A549 (cell line): ENCODE measurements at regions of chr1 and their contacts with region 1.

Region 1: GRCh38 chr1:157992031-157992832 is 1.2 kb upstream of the KIRREL1 start:
- DNase-seq: peak; percentile 69
- ATAC-seq: peak; percentile 54 to 76
- H3K4me3 ChIP-seq: peak overlapping the region; percentile 98; the same call in 1 of the 3 replicates
- H3K27ac ChIP-seq: peak overlapping the region; percentile 97 to 98
- H3K4me1 ChIP-seq: peaks cover 35% of the 10 kb centered on the region
- CTCF ChIP-seq: peak; percentile 97
- EP300 ChIP-seq: no peak
- POLR2A ChIP-seq: no peak
- RAD21 ChIP-seq: peak; percentile 98 to 100

Region 2: DNA sequence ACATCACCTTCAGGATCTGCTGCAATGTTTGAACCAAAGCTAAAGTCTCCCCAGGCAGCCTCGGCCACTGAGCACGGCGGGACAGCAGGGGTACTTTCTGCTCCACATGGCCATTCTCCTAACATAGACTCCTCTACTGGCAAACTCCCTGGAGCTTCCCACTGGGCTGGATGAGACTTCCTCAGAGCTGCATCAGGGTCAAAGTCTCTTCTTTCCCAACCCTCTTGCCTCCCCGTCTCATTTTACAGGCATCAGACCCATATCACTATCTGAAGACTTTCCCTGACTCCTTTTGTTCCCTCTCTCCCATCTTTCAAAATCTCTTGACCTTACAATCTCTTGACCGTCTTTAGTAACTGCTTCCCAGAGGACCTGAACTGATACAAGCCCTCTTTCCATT is 41.0 kb before region 1 on chr1:
- CTCF ChIA-PET with region 1: no interaction called
- POLR2A ChIA-PET with region 1: no interaction called
- DNase-seq: no peak
- ATAC-seq: no peak
- H3K4me3 ChIP-seq: no peak overlapping the region
- H3K27ac ChIP-seq: no peak overlapping the region
- H3K4me1 ChIP-seq: no peaks in the 10 kb centered on the region
- CTCF ChIP-seq: no peak
- EP300 ChIP-seq: no peak
- POLR2A ChIP-seq: no peak
- RAD21 ChIP-seq: no peak

Region 3: DNA sequence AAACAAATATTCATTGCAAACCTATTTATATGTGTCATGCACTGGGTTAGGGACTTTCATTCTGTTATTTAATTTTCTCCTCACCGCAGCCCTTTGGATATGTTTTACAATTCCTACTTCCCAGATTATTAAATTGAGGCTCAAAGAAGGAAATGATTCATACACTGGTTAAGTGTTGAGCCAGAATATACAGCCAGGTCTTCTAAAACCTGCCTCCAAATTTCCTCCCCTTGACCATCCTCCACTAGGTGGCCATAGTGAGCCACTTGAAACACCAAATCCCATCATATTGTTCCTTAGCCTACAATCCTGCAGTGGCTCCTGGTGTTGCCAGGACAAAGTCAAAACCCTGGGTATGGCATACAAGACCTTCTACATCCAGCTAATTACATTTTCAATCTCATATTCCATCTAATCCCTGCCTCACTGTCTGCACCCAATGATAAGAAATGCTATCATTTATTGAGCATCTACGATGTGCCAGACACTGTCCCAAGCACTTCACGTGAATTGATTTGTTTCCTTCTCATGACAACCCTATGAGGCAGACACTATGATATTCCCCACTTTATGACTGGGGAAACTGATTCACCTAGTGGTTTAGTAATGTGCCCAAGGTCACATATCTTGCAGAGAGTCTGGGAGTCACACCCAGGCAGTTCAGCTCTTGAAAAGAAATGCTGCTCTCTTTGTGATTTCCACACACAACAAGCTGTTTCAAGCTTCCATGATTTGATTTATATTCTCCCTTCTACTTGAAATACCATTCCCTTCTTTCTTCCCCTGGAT is 22.3 kb before region 1 on chr1:
- CTCF ChIA-PET with region 1: interaction called, 139 read pairs
- POLR2A ChIA-PET with region 1: interaction called, 6 read pairs
- DNase-seq: peak; percentile 60 to 72
- ATAC-seq: peak; percentile 70 to 84
- H3K4me3 ChIP-seq: no peak overlapping the region
- H3K27ac ChIP-seq: peak overlapping the region; percentile 75 to 87
- H3K4me1 ChIP-seq: peaks cover 44% of the 10 kb centered on the region
- CTCF ChIP-seq: peak; percentile 85
- EP300 ChIP-seq: no peak
- POLR2A ChIP-seq: no peak
- RAD21 ChIP-seq: peak; percentile 77 to 85

Region 4: GRCh38 chr1:158013840-158014730 is 21.9 kb after region 1 on chr1:
- CTCF ChIA-PET with region 1: interaction called, 1,281 read pairs
- POLR2A ChIA-PET with region 1: interaction called, 22 read pairs
- DNase-seq: no peak
- ATAC-seq: no peak
- H3K4me3 ChIP-seq: no peak overlapping the region
- H3K27ac ChIP-seq: peak overlapping the region in 1 of 2 experiments; percentile 98; a peak in 3 of 6 replicates
- H3K4me1 ChIP-seq: peaks cover 95% of the 10 kb centered on the region
- CTCF ChIP-seq: no peak
- EP300 ChIP-seq: no peak
- POLR2A ChIP-seq: no peak
- RAD21 ChIP-seq: no peak

Region 5: DNA sequence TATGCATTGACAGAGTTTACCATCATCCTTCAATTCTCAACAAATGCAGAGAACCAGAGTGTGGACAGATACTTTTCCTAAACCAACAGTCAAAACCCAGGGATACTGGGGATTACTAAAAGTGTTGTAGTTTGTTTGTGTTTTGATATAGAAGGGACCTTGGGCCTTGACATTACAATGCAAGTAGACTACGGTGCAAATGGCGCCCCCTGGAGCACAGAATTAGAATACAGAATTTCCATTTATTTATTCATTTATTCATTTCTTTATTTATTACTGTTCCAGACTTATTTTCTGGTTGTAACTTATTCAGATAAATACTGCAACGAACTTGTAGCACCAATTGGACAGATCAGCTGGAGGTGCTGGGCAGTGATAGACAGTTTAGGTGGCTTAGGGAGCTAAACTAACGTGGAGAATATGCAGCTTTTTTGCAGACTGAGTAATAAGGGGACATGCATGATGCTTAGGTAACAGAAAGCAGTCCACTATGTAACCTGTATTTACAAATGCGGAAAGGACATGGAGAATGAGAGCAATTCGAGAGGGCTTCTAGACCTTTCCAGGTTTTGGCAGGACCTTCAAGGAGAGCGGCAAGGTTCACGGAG is 43.8 kb after region 1 on chr1:
- CTCF ChIA-PET with region 1: interaction called, 1,281 read pairs
- POLR2A ChIA-PET with region 1: interaction called, 4 read pairs
- DNase-seq: peak in 1 of 2 experiments; percentile 72
- ATAC-seq: peak; percentile 23 to 57; a peak in 3 of 6 replicates
- H3K4me3 ChIP-seq: no peak overlapping the region
- H3K27ac ChIP-seq: peak overlapping the region; percentile 66 to 84; a peak in 5 of 6 replicates
- H3K4me1 ChIP-seq: peaks cover 36% of the 10 kb centered on the region
- CTCF ChIP-seq: peak; percentile 88
- EP300 ChIP-seq: no peak
- POLR2A ChIP-seq: no peak
- RAD21 ChIP-seq: peak; percentile 81 to 84

Region 6: DNA sequence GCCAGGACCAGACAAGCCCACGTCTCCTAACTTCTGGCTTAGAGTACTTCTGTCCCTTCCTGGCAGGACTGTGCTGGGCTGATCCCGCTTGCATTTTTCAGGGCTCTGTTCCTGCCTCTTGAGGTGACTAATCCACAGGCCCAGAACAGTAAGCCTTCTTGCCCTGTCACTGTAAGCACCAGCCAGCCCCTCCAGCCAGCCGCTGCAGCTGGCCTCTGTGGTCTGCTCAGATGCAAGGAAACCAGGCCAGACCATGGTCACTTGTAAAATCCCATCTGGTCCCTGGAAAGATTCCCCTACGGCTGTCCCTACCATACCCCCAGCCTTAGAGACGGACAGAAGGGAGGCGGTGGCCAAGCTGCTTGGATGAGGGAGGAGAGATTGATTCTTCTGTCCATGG is 75.4 kb after region 1 on chr1:
- CTCF ChIA-PET with region 1: interaction called, 11 read pairs
- POLR2A ChIA-PET with region 1: no interaction called
- DNase-seq: no peak
- ATAC-seq: peak in 1 of 2 experiments; percentile 24; a peak in 1 of 6 replicates
- H3K4me3 ChIP-seq: no peak overlapping the region
- H3K27ac ChIP-seq: no peak overlapping the region
- H3K4me1 ChIP-seq: no peaks in the 10 kb centered on the region
- CTCF ChIP-seq: no peak
- EP300 ChIP-seq: no peak
- POLR2A ChIP-seq: no peak
- RAD21 ChIP-seq: no peak

Region 7: DNA sequence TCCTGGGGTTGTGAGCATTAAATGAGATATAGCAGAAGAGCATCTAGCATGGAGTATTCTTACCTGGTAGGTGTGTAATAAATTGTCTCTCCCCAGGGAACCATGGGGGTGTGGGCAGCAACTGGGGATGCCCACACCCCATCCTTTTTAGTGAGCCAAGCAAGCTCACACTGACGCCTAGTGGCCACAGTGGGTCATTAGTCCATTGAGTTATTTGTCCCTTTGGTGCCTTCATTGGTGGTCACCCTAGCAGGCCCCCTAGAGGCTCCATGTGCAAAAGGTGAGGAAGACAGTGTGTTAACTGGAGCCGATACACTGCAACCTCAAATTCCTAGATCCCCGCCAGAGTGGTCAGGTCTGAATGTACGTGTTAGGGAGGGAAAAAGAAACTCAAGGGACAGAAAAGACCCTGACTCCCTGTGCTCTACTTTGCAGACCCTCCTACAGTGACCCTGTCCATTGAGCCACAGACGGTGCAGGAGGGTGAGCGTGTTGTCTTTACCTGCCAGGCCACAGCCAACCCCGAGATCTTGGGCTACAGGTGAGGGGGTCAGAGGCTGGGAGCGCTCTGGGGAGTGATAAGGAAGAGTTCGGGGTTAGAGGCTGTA is 95.2 kb after region 1 on chr1:
- CTCF ChIA-PET with region 1: interaction called, 2,212 read pairs
- POLR2A ChIA-PET with region 1: interaction called, 5 read pairs
- DNase-seq: peak; percentile 84 to 86
- ATAC-seq: peak; percentile 89 to 95
- H3K4me3 ChIP-seq: no peak overlapping the region
- H3K27ac ChIP-seq: 0 out of 6 replicates have a peak overlapping the region, but pooled peaks of 1 of the 2 experiments have one; percentile 22
- H3K4me1 ChIP-seq: no peaks in the 10 kb centered on the region
- CTCF ChIP-seq: peak; percentile 99
- EP300 ChIP-seq: no peak
- POLR2A ChIP-seq: no peak
- RAD21 ChIP-seq: peak; percentile 93 to 95